ENCODE measurements at regions of chr3 and their contacts with region 1.

Region 1: GRCh38 chr3:49093853-49094767 is at the start of gene QRICH1:
- DNase-seq: peak; percentile 93 to 98 (median 96)
- ATAC-seq: peak; percentile 86
- H3K4me3 ChIP-seq: peak within 1 kb of the TSS; percentile 100
- H3K4me3 Mint-ChIP-seq: peak within 1 kb of the TSS; percentile 85 to 99 (median 96)
- H3K27ac ChIP-seq: peak within 1 kb of the TSS; percentile 87
- H3K27ac Mint-ChIP-seq: peak within 1 kb of the TSS; percentile 88 to 99 (median 97)
- H3K4me1 ChIP-seq: peaks cover 26 to 35% of the 10 kb centered on the region in 2 donors
- H3K4me1 Mint-ChIP-seq: peaks cover 25 to 49% (median 34%) of the 10 kb centered on the region in 7 donors
- H3K27me3 ChIP-seq: no peaks in the 10 kb centered on the region
- H3K27me3 Mint-ChIP-seq: no peaks in the 10 kb centered on the region
- total RNA-seq, gene QRICH1: 146 to 192 (median 184) TPM

Region 2: GRCh38 chr3:48472915-48473616 is 621.0 kb before region 1 on chr3:
- CTCF ChIA-PET with region 1: no interaction called
- POLR2A ChIA-PET with region 1: no interaction called
- intact Hi-C with region 1: loop called in 1 of 2 experiments (anchors 5 kb)
- DNase-seq: peak; percentile 79 to 98 (median 95)
- ATAC-seq: peak; percentile 93
- H3K4me3 ChIP-seq: peak overlapping the region; percentile 92
- H3K4me3 Mint-ChIP-seq: peak overlapping the region; percentile 87 to 100 (median 94)
- H3K27ac ChIP-seq: peak overlapping the region; percentile 95
- H3K27ac Mint-ChIP-seq: peak overlapping the region; percentile 90 to 100 (median 99)
- H3K4me1 ChIP-seq: peaks cover 46 to 54% of the 10 kb centered on the region in 2 donors
- H3K4me1 Mint-ChIP-seq: peaks cover 41 to 75% (median 64%) of the 10 kb centered on the region in 7 donors
- H3K27me3 ChIP-seq: no peaks in the 10 kb centered on the region
- H3K27me3 Mint-ChIP-seq: peaks cover 0 to 2% (median 0%) of the 10 kb centered on the region in 5 donors

Region 3: DNA sequence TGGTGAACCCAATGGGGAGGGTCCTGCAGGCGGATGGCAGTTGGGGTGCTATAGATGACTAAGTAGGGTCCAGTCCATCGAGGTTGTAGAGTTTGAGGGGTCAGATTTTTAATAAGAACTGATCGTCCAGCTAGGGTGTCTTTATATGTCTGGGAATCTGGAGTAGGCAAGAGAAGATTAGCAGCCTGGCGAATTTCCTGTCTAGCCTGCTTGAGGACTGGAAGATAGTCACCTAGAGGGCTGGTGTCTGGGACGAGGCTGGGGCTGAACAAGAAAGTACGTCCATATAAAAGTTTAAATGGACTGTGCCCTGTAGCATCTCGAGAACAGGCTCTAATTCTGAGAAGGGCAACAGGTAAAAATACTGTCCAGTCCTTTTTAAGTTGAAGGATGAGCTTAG is 370.4 kb before region 1 on chr3:
- CTCF ChIA-PET with region 1: no interaction called
- POLR2A ChIA-PET with region 1: no interaction called
- intact Hi-C with region 1: no loop called
- DNase-seq: no peak
- ATAC-seq: no peak
- H3K4me3 ChIP-seq: no peak overlapping the region
- H3K4me3 Mint-ChIP-seq: no peak overlapping the region
- H3K27ac ChIP-seq: no peak overlapping the region
- H3K27ac Mint-ChIP-seq: no peak overlapping the region
- H3K4me1 ChIP-seq: no peaks in the 10 kb centered on the region
- H3K4me1 Mint-ChIP-seq: no peaks in the 10 kb centered on the region
- H3K27me3 ChIP-seq: no peaks in the 10 kb centered on the region
- H3K27me3 Mint-ChIP-seq: peaks cover 0 to 26% (median 0%) of the 10 kb centered on the region in 5 donors

Region 4: GRCh38 chr3:48898383-48899234 is 195.5 kb before region 1 on chr3 and contains the start of gene SLC25A20:
- CTCF ChIA-PET with region 1: no interaction called
- POLR2A ChIA-PET with region 1: interaction called, 5 read pairs
- intact Hi-C with region 1: loop called in 1 of 2 experiments (anchors 5 kb)
- DNase-seq: peak; percentile 78 to 95 (median 85)
- ATAC-seq: peak; percentile 98
- H3K4me3 ChIP-seq: peak within 1 kb of the TSS; percentile 91
- H3K4me3 Mint-ChIP-seq: peak within 1 kb of the TSS; percentile 89 to 99 (median 94)
- H3K27ac ChIP-seq: peak within 1 kb of the TSS; percentile 76
- H3K27ac Mint-ChIP-seq: peak within 1 kb of the TSS; percentile 83 to 99 (median 93)
- H3K4me1 ChIP-seq: peaks cover 21 to 23% of the 10 kb centered on the region in 2 donors
- H3K4me1 Mint-ChIP-seq: peaks cover 27 to 51% (median 41%) of the 10 kb centered on the region in 7 donors
- H3K27me3 ChIP-seq: no peaks in the 10 kb centered on the region
- H3K27me3 Mint-ChIP-seq: no peaks in the 10 kb centered on the region
- total RNA-seq, gene SLC25A20: 6.6 to 27.3 (median 12.8) TPM

Region 5: DNA sequence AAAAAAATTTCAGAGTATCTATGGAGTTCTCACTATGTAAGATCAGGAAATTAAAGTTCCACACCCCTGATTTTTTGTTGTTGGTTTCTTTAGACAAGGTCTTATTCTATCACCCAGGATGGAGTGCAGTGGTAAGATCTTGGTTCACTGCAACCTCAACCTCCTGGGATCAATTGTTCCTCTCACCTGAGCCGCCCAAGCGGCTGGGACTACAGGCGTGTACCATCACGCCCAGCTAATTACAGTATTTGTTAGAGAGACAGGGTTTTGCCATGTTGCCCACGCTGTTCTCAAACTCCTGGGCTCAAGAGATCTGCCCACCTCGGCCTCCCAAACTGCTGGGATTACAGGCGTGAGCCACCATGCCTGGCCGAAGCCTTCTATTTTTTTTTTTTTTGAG is 12.7 kb before region 1 on chr3:
- CTCF ChIA-PET with region 1: interaction called, 4 read pairs
- POLR2A ChIA-PET with region 1: interaction called, 10 read pairs
- intact Hi-C with region 1: loop called in 1 of 2 experiments (anchors 2 kb)
- DNase-seq: no peak
- ATAC-seq: no peak
- H3K4me3 ChIP-seq: no peak overlapping the region
- H3K4me3 Mint-ChIP-seq: no peak overlapping the region
- H3K27ac ChIP-seq: no peak overlapping the region
- H3K27ac Mint-ChIP-seq: no peak overlapping the region
- H3K4me1 ChIP-seq: peaks cover 0 to 7% of the 10 kb centered on the region in 2 donors
- H3K4me1 Mint-ChIP-seq: peaks cover 4 to 39% (median 18%) of the 10 kb centered on the region in 7 donors
- H3K27me3 ChIP-seq: no peaks in the 10 kb centered on the region
- H3K27me3 Mint-ChIP-seq: no peaks in the 10 kb centered on the region

Region 6: DNA sequence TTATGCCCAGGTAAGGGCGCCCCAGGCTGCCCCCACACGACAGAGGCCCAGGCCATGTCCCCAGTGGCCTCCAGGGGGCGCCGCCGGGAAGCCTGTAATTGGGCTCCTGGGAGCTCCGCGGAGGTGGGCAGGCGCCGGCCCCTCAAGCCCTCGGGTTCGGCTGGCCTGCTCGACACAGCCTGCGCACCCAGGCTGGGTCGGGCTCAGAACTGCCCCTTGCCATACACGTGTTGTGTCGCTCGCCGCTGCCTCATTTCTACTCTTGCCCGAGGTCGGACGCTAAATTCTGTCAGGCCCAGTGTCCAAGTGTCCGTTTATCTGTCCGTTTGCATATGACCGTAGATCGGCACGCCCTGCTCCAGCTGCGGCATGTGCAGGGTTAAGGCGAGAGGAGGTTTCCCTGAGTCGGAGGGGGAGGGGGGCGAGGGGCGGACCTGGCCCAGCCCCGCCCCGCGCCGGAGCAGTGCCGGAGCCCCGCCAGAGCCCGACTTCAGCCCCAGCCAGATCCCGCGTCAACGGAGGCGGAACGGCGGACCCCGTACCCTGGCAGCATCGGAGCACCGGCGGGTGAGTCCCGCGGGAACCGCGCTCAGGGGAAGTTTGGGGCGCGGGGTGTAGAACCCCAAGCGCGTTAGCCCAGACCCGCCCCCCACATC is 77.1 kb after region 1 on chr3 and contains the start of gene KLHDC8B:
- CTCF ChIA-PET with region 1: interaction called, 3 read pairs
- POLR2A ChIA-PET with region 1: interaction called, 10 read pairs
- intact Hi-C with region 1: loop called (anchors 1 kb)
- DNase-seq: peak; percentile 65 to 89 (median 76)
- ATAC-seq: peak; percentile 88
- H3K4me3 ChIP-seq: peak within 1 kb of the TSS; percentile 95
- H3K4me3 Mint-ChIP-seq: peak within 1 kb of the TSS; percentile 83 to 94 (median 88)
- H3K27ac ChIP-seq: peak within 1 kb of the TSS; percentile 58
- H3K27ac Mint-ChIP-seq: peak within 1 kb of the TSS; percentile 61 to 92 (median 78)
- H3K4me1 ChIP-seq: peaks cover 11 to 26% of the 10 kb centered on the region in 2 donors
- H3K4me1 Mint-ChIP-seq: peaks cover 8 to 40% (median 26%) of the 10 kb centered on the region in 7 donors
- H3K27me3 ChIP-seq: no peaks in the 10 kb centered on the region
- H3K27me3 Mint-ChIP-seq: no peaks in the 10 kb centered on the region
- total RNA-seq, gene KLHDC8B: 1.5 to 7.1 (median 5.2) TPM

Region 7: DNA sequence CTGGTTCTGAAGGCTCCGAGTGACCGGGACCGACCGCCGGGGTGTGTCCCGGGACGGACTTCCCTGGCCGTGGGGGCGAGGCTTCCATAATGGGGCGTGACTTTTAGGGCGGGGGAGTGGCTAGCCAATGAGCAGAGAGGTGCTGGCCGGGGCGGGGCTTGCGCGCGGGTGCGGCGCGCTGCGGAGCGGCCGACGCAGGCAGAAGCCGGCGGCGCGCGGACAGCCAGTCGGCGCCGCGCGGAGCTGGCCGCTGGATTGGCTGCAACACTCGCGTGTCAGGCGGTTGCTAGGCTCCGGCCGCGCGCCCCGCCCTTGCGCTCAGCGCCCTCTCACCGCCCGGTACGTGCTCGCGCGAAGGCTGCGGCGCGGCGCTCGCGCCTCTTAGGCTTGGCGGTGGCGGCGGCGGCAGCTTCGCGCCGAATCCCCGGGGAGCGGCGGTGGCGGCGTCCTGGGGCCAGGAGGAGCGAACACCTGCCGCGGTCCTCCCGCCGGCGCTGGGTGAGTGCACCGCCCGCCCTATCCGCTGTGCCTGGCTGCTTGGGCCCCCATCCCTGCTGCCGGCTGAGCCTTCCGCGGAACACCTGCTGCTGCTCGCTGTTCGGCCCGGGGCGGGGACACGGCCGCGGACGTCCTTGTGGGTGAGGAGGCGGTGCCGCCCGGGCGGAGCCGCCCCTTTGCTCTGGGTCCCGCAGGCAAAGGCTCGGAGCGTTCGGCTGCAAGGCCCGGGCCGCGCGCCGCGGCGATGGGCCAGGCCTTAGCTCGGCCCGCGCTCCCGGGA is 376.0 kb after region 1 on chr3 and contains the start of gene DAG1:
- CTCF ChIA-PET with region 1: interaction called, 3 read pairs
- POLR2A ChIA-PET with region 1: interaction called, 8 read pairs
- intact Hi-C with region 1: loop called in 1 of 2 experiments (anchors 1 kb)
- DNase-seq: peak; percentile 90 to 98 (median 95)
- ATAC-seq: peak; percentile 91
- H3K4me3 ChIP-seq: peak within 1 kb of the TSS; percentile 92
- H3K4me3 Mint-ChIP-seq: peak within 1 kb of the TSS; percentile 87 to 97 (median 92)
- H3K27ac ChIP-seq: peak within 1 kb of the TSS; percentile 94
- H3K27ac Mint-ChIP-seq: peak within 1 kb of the TSS; percentile 89 to 95 (median 93)
- H3K4me1 ChIP-seq: peaks cover 15 to 20% of the 10 kb centered on the region in 2 donors
- H3K4me1 Mint-ChIP-seq: peaks cover 14 to 27% (median 22%) of the 10 kb centered on the region in 7 donors
- H3K27me3 ChIP-seq: no peaks in the 10 kb centered on the region
- H3K27me3 Mint-ChIP-seq: no peaks in the 10 kb centered on the region
- total RNA-seq, gene DAG1: 12.0 to 22.3 (median 20.1) TPM

Measured in naive thymus-derived CD4-positive, alpha-beta T cell (primary cell).